ENCODE measurements at regions of chr5 and their contacts with region 1.

Region 1: DNA sequence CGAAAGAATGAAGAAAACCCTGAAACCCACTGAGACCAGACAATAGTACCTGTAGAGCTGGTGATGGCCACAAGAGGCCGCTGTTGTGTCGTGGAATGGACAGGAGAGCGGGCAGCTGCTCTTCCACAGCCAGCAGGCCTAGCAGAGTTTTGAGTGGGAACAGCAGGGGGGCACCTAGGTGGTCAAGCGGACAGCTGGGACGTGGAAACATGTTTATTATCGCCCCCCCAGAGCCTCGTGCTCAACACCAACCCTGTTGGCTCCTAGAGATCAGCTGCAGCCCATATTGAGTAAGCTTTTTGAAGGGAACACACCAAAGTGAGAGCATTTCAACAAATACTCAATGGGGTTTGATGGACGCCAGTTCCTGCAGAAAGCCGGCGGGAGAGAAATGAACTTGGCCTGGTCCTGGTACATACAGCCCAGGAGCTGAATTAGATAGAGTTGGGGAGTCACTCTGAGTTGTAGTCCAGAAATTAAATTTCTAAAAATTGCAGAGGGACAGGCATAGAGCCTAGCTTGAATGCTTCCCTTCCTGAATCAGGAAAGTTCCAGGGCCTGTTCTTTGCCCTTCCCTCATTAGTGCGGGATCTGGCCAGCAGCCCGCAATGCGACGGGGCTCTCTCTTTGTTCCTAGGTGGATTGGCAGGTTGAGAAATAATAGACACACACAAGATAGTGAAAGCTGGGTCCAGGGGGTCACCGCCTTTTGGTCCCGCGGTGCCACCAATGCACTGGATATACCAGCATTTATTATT is 33.8 kb downstream of the MFAP3 start:
- DNase-seq: peak; percentile 54 to 90 (median 78)
- ATAC-seq: peak; percentile 82 to 91 (median 84)
- H3K4me3 ChIP-seq: no peak overlapping the region
- H3K4me3 Mint-ChIP-seq: peak overlapping the region in 1 of 3 donors; percentile 4
- H3K27ac ChIP-seq: no peak overlapping the region
- H3K27ac Mint-ChIP-seq: peak overlapping the region; percentile 28 to 54
- H3K4me1 ChIP-seq: peaks cover 4 to 24% of the 10 kb centered on the region in 2 experiments
- H3K4me1 Mint-ChIP-seq: peaks cover 22 to 42% (median 40%) of the 10 kb centered on the region in 3 donors
- H3K27me3 ChIP-seq: no peaks in the 10 kb centered on the region
- H3K27me3 Mint-ChIP-seq: peaks cover 0 to 12% of the 10 kb centered on the region in 2 donors

Region 2: GRCh38 chr5:153835891-153836515 is 236.6 kb before region 1 on chr5:
- CTCF ChIA-PET with region 1: no interaction called
- POLR2A ChIA-PET with region 1: no interaction called
- DNase-seq: no peak
- ATAC-seq: no peak
- H3K4me3 ChIP-seq: no peak overlapping the region
- H3K4me3 Mint-ChIP-seq: no peak overlapping the region
- H3K27ac ChIP-seq: no peak overlapping the region
- H3K27ac Mint-ChIP-seq: no peak overlapping the region
- H3K4me1 ChIP-seq: no peaks in the 10 kb centered on the region
- H3K4me1 Mint-ChIP-seq: no peaks in the 10 kb centered on the region
- H3K27me3 ChIP-seq: no peaks in the 10 kb centered on the region
- H3K27me3 Mint-ChIP-seq: peaks cover 5% of the 10 kb centered on the region in 2 donors

Region 3: GRCh38 chr5:153891394-153891793 is 181.2 kb before region 1 on chr5:
- CTCF ChIA-PET with region 1: no interaction called
- POLR2A ChIA-PET with region 1: no interaction called
- DNase-seq: no peak
- ATAC-seq: no peak
- H3K4me3 ChIP-seq: no peak overlapping the region
- H3K4me3 Mint-ChIP-seq: no peak overlapping the region
- H3K27ac ChIP-seq: no peak overlapping the region
- H3K27ac Mint-ChIP-seq: no peak overlapping the region
- H3K4me1 ChIP-seq: no peaks in the 10 kb centered on the region
- H3K4me1 Mint-ChIP-seq: no peaks in the 10 kb centered on the region
- H3K27me3 ChIP-seq: peaks cover 0 to 3% of the 10 kb centered on the region in 2 experiments
- H3K27me3 Mint-ChIP-seq: peaks cover 0 to 4% of the 10 kb centered on the region in 2 donors

Region 4: DNA sequence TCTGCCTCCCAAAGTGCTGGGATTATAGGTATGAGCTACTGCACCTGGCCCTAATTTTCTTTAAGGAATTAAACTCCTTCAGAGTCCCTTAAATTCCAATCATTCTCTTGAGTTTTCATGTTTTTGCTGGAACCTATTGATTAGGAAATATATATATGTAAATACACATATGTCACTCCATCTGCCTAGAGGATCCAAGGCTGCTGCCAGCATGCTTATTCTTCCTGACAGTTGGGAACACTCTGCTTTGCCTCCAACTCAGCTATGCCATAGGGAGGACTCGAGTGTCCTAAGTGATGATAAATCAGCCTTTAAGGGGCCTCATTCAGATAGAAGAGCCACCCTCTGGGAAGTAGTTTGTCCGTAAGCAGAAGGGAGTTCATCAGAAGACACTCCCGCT is 12.0 kb before region 1 on chr5:
- CTCF ChIA-PET with region 1: interaction called, 5 to 15 read pairs
- POLR2A ChIA-PET with region 1: no interaction called
- DNase-seq: no peak
- ATAC-seq: no peak
- H3K4me3 ChIP-seq: no peak overlapping the region
- H3K4me3 Mint-ChIP-seq: no peak overlapping the region
- H3K27ac ChIP-seq: no peak overlapping the region
- H3K27ac Mint-ChIP-seq: no peak overlapping the region
- H3K4me1 ChIP-seq: peaks cover 0 to 8% of the 10 kb centered on the region in 2 experiments
- H3K4me1 Mint-ChIP-seq: peaks cover 20 to 23% (median 22%) of the 10 kb centered on the region in 3 donors
- H3K27me3 ChIP-seq: no peaks in the 10 kb centered on the region
- H3K27me3 Mint-ChIP-seq: no peaks in the 10 kb centered on the region

Region 5: DNA sequence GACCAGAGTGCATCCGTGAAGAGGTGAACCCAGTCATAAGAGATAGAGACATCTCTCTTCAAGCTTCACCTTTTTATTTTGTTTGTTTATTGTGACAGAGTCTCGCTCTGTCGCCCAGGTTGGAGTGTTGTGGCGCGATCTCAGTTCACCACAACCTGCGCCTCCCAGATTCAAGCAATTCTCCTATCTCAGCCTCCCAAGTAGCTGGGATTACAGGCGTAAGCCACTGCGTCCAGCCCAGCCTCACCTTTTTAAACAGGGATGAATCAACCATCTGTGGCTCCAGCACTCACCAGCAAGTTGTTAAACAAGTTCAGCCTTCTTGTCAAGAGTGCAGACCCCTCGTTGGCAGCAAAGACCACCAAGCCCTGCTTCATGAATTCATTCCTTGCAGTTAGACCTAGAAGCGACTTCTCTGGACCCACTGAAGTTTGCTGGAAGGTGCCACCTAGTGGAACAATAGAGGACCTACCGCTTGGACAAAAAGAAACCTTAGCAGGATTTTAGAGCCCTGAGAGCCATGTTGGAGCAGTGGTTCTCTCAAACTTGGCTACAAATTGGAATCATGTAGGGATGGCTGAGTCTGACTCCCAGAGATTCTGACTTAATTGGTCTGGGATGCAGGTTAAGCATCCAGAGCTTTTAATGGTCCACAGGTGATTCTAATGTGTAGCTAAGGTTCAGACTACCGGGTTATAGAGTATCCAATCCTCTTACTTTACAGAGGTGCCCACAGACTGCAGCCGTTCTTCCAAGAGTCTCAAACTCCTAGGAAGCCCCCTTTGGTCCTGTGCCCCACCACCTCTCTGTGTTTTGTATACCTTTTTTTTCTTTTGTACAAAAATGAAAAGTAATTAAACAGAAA is 107.5 kb after region 1 on chr5:
- CTCF ChIA-PET with region 1: interaction called, 11 to 13 read pairs
- POLR2A ChIA-PET with region 1: no interaction called
- DNase-seq: peak in 15 of 35 experiments; percentile 5 to 68 (median 25)
- ATAC-seq: peak; percentile 80 to 92 (median 86)
- H3K4me3 ChIP-seq: no peak overlapping the region
- H3K4me3 Mint-ChIP-seq: no peak overlapping the region
- H3K27ac ChIP-seq: no peak overlapping the region
- H3K27ac Mint-ChIP-seq: no peak overlapping the region
- H3K4me1 ChIP-seq: no peaks in the 10 kb centered on the region
- H3K4me1 Mint-ChIP-seq: peaks cover 0 to 3% (median 0%) of the 10 kb centered on the region in 3 donors
- H3K27me3 ChIP-seq: peaks cover 0 to 5% of the 10 kb centered on the region in 2 experiments
- H3K27me3 Mint-ChIP-seq: peaks cover 3 to 4% of the 10 kb centered on the region in 2 donors

Region 6: GRCh38 chr5:154189819-154190594 is 117.4 kb after region 1 on chr5:
- CTCF ChIA-PET with region 1: interaction called, 9 to 11 read pairs
- POLR2A ChIA-PET with region 1: no interaction called
- DNase-seq: peak; percentile 53 to 91 (median 75)
- ATAC-seq: peak; percentile 82 to 85 (median 83)
- H3K4me3 ChIP-seq: peak overlapping the region; percentile 76 to 99
- H3K4me3 Mint-ChIP-seq: peak overlapping the region; percentile 81 to 86 (median 86)
- H3K27ac ChIP-seq: peak overlapping the region; percentile 78
- H3K27ac Mint-ChIP-seq: peak overlapping the region; percentile 58 to 71
- H3K4me1 ChIP-seq: peaks cover 7 to 36% of the 10 kb centered on the region in 2 experiments
- H3K4me1 Mint-ChIP-seq: peaks cover 49 to 51% (median 50%) of the 10 kb centered on the region in 3 donors
- H3K27me3 ChIP-seq: peaks cover 0 to 5% of the 10 kb centered on the region in 2 experiments
- H3K27me3 Mint-ChIP-seq: no peaks in the 10 kb centered on the region

Region 7: GRCh38 chr5:154196955-154197652 is 124.5 kb after region 1 on chr5:
- CTCF ChIA-PET with region 1: interaction called, 5 to 12 read pairs
- POLR2A ChIA-PET with region 1: no interaction called
- DNase-seq: peak in 2 of 35 experiments; percentile 35 to 43
- ATAC-seq: peak; percentile 11 to 56 (median 22)
- H3K4me3 ChIP-seq: no peak overlapping the region
- H3K4me3 Mint-ChIP-seq: peak overlapping the region; percentile 2 to 63 (median 18)
- H3K27ac ChIP-seq: peak overlapping the region; percentile 61
- H3K27ac Mint-ChIP-seq: peak overlapping the region; percentile 91 to 96
- H3K4me1 ChIP-seq: peaks cover 19 to 62% of the 10 kb centered on the region in 2 experiments
- H3K4me1 Mint-ChIP-seq: peaks cover 79 to 86% (median 82%) of the 10 kb centered on the region in 3 donors
- H3K27me3 ChIP-seq: no peaks in the 10 kb centered on the region
- H3K27me3 Mint-ChIP-seq: no peaks in the 10 kb centered on the region

Region 8: GRCh38 chr5:154405078-154405792 is 332.6 kb after region 1 on chr5:
- CTCF ChIA-PET with region 1: interaction called, 19 to 51 read pairs
- POLR2A ChIA-PET with region 1: no interaction called
- DNase-seq: peak; percentile 30 to 79 (median 62)
- ATAC-seq: peak; percentile 92 to 98 (median 94)
- H3K4me3 ChIP-seq: peak overlapping the region in 1 of 2 donors; percentile 35
- H3K4me3 Mint-ChIP-seq: peak overlapping the region; percentile 17 to 70 (median 21)
- H3K27ac ChIP-seq: no peak overlapping the region
- H3K27ac Mint-ChIP-seq: no peak overlapping the region
- H3K4me1 ChIP-seq: peaks cover 0 to 9% of the 10 kb centered on the region in 2 experiments
- H3K4me1 Mint-ChIP-seq: peaks cover 10 to 16% (median 13%) of the 10 kb centered on the region in 3 donors
- H3K27me3 ChIP-seq: no peaks in the 10 kb centered on the region
- H3K27me3 Mint-ChIP-seq: no peaks in the 10 kb centered on the region

Region 9: DNA sequence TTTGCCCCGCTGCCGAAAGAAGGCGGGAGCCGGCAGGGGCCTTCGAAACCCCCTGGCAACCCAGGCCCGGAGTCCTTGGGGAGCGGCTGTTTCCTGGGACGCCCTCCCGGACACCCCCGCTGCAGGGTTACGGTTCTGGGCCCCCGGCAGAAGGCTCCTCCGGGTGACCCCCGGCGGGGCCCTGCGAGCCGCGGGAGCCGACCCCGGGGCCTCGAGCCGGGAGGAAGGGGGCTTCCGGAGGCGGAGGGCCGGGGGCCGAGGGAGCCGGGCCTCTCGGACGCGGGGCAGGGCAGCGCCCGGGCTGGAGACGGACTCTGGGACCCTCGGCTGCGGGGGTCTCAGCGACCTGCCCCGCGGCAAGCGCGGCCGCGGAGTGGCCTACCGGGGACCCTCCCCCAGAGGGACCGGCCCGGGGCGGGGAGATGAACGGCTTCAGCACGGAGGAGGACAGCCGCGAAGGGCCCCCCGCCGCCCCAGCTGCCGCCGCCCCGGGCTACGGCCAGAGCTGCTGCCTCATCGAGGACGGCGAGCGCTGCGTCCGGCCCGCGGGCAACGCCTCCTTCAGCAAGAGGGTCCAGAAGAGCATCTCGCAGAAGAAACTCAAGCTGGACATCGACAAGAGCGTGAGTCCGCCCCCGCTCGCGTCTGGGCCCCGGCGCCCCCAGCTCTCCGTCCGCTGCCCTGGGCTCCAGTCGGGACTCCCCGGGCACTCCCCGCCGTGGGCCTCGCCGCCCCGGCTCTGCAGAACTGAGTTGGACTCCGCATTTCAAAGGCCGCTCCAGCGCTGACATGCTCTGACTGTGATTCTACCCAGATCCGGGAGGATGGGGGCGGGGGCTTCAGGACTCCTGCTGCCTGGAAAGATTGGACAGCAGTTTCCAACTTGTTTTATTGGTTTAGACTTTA is 373.8 kb after region 1 on chr5:
- CTCF ChIA-PET with region 1: interaction called, 3 to 16 read pairs
- POLR2A ChIA-PET with region 1: no interaction called
- DNase-seq: peak in 27 of 35 experiments; percentile 2 to 56 (median 23)
- ATAC-seq: peak; percentile 15 to 27 (median 16)
- H3K4me3 ChIP-seq: peak overlapping the region; percentile 65 to 95
- H3K4me3 Mint-ChIP-seq: peak overlapping the region; percentile 90 to 99 (median 90)
- H3K27ac ChIP-seq: peak overlapping the region; percentile 43
- H3K27ac Mint-ChIP-seq: peak overlapping the region; percentile 82 to 86
- H3K4me1 ChIP-seq: peaks cover 22 to 34% of the 10 kb centered on the region in 2 experiments
- H3K4me1 Mint-ChIP-seq: peaks cover 61 to 67% (median 66%) of the 10 kb centered on the region in 3 donors
- H3K27me3 ChIP-seq: no peaks in the 10 kb centered on the region
- H3K27me3 Mint-ChIP-seq: no peaks in the 10 kb centered on the region

Measured in T-cell (primary cell).